GM12878 (cell line): ENCODE measurements at regions of chr14 and their contacts with region 1.

Region 1: GRCh38 chr14:24921903-24922302 is 128.0 kb downstream of the STXBP6 start:
- DNase-seq: no peak
- ATAC-seq: peak; percentile 14; the same call in 1 of the 3 replicates
- H3K4me3 ChIP-seq: no peak overlapping the region
- H3K27ac ChIP-seq: no peak overlapping the region
- H3K4me1 ChIP-seq: no peaks in the 10 kb centered on the region
- H3K27me3 ChIP-seq: no peaks in the 10 kb centered on the region
- CTCF ChIP-seq: no peak
- EP300 ChIP-seq: no peak
- POLR2A ChIP-seq: no peak
- RAD21 ChIP-seq: no peak

Region 2: DNA sequence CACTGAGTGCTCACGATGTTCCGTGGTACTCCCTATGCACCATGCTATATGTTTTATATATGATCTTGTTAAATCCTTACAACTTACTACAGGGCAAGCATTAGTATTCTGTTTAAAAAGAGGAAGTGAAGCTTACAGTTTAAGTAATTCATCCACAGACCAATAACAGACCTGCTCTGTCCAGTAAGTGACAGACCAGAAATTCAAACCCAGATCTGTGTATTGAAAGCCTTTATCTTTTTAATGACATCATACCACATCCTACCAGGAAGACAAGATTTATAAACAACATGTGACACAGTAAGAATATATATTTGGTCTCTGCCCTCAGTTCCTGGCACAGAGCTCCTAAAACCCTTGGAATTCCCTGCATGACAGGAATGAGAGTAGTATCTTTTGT is 78.4 kb before region 1 on chr14:
- CTCF ChIA-PET with region 1: no interaction called
- POLR2A ChIA-PET with region 1: no interaction called
- RAD21 ChIA-PET with region 1: interaction called, 10 read pairs
- SMC1A ChIA-PET with region 1: no interaction called
- in situ Hi-C with region 1: no loop called
- intact Hi-C with region 1: no loop called
- DNase-seq: peak; percentile 13
- ATAC-seq: peak; percentile 97
- H3K4me3 ChIP-seq: no peak overlapping the region
- H3K27ac ChIP-seq: no peak overlapping the region
- H3K4me1 ChIP-seq: no peaks in the 10 kb centered on the region
- H3K27me3 ChIP-seq: no peaks in the 10 kb centered on the region
- CTCF ChIP-seq: no peak
- EP300 ChIP-seq: peak; percentile 10 to 50; a peak in 2 of 4 replicates
- POLR2A ChIP-seq: no peak
- RAD21 ChIP-seq: no peak

Region 3: GRCh38 chr14:24941719-24942118 is 19.8 kb after region 1 on chr14:
- CTCF ChIA-PET with region 1: interaction called, 37 read pairs
- POLR2A ChIA-PET with region 1: interaction called, 3 read pairs
- RAD21 ChIA-PET with region 1: interaction called, 8 read pairs
- SMC1A ChIA-PET with region 1: interaction called, 61 read pairs
- in situ Hi-C with region 1: no loop called
- intact Hi-C with region 1: no loop called
- DNase-seq: no peak
- ATAC-seq: peak; percentile 36
- H3K4me3 ChIP-seq: no peak overlapping the region
- H3K27ac ChIP-seq: peak overlapping the region; percentile 30; the same call in 1 of the 2 replicates
- H3K4me1 ChIP-seq: no peaks in the 10 kb centered on the region; the same call in none of the 2 replicates
- H3K27me3 ChIP-seq: no peaks in the 10 kb centered on the region
- CTCF ChIP-seq: no peak
- EP300 ChIP-seq: no peak
- POLR2A ChIP-seq: no peak
- RAD21 ChIP-seq: no peak

Region 4: DNA sequence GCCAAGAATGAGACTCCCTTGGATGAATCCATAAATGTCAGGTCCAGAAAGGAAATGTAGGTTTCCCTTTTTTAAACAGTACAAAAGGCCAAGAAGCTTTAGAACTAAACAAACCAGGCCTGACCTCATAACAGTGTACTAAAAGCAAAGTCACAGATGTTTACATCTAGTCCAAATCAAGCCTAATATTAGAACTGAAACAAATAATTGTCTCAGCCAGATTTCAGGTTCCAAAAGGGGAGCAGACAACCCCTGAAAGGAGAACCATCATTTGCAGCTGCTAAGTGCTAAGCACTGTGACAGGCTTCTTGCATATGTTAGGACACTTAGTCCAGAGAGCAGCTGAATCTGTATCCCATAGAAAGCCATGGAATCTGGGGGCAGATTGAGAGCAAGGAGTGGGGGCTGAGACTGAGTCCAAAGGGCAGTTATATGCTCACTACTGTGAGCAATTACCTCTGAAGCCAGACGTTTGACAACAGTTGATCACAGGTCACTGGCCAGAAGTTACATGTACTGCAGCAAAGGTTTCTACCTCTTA is 38.0 kb after region 1 on chr14:
- CTCF ChIA-PET with region 1: interaction called, 3 read pairs
- POLR2A ChIA-PET with region 1: interaction called, 7 read pairs
- RAD21 ChIA-PET with region 1: interaction called, 31 read pairs
- SMC1A ChIA-PET with region 1: interaction called, 23 read pairs
- in situ Hi-C with region 1: no loop called
- intact Hi-C with region 1: no loop called
- DNase-seq: no peak
- ATAC-seq: peak; percentile 77
- H3K4me3 ChIP-seq: no peak overlapping the region
- H3K27ac ChIP-seq: 0 out of 2 replicates have a peak overlapping the region, but pooled peaks have one; percentile 31
- H3K4me1 ChIP-seq: peaks cover under 1% of the 10 kb centered on the region
- H3K27me3 ChIP-seq: no peaks in the 10 kb centered on the region
- CTCF ChIP-seq: no peak
- EP300 ChIP-seq: peak in 1 of 2 experiments; percentile 27; a peak in 1 of 4 replicates
- POLR2A ChIP-seq: no peak
- RAD21 ChIP-seq: no peak